H1 (cell line): ENCODE measurements at regions of chr17 and their contacts with region 1.

Region 1: DNA sequence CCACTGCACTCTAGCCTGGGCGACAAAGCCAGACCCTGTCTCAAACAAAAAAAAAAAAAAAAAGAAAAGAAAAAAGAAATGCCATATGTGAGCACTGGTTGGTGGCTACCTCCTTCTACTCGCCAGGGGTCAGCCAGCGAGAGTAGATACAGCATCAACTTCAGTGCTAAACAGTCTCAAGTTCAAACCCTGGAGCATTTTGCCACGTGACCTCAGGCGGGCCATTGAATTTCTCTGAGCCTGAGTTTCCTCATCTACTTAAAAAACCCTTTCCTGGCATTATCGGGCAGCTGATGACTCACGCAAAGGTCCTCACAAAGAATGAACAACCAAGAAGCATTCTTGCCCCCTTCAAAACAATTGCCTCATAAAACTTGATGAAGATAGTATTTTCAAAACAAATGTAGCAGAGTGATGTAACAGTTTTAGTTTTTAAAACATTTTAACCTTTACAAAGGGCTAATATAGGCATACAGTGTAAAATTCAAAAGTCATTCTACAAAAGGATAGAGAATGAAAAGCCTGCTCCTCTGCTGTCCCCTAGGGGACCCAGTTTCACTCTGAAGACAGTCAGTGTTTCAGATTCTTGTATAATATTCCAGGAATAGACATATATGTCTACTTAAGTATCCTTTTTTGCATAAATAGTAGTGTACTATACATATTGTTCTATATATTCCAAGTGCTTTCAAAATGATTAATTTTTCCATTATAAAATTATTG is 28.4 kb downstream of the DNAH2 start:
- DNase-seq: no peak
- H3K4me3 ChIP-seq: no peak overlapping the region
- H3K27ac ChIP-seq: no peak overlapping the region
- H3K4me1 ChIP-seq: no peaks in the 10 kb centered on the region
- H3K27me3 ChIP-seq: no peaks in the 10 kb centered on the region; a peak in 1 of 7 replicates
- CTCF ChIP-seq: no peak
- EP300 ChIP-seq: no peak
- POLR2A ChIP-seq: no peak
- RAD21 ChIP-seq: no peak

Region 2: GRCh38 chr17:7538891-7539290 is 207.0 kb before region 1 on chr17:
- CTCF ChIA-PET with region 1: no interaction called
- POLR2A ChIA-PET with region 1: no interaction called
- DNase-seq: no peak
- H3K4me3 ChIP-seq: no peak overlapping the region
- H3K27ac ChIP-seq: no peak overlapping the region
- H3K4me1 ChIP-seq: no peaks in the 10 kb centered on the region
- H3K27me3 ChIP-seq: no peaks in the 10 kb centered on the region; a peak in 1 of 7 replicates
- CTCF ChIP-seq: no peak
- EP300 ChIP-seq: no peak
- POLR2A ChIP-seq: no peak
- RAD21 ChIP-seq: no peak

Region 3: DNA sequence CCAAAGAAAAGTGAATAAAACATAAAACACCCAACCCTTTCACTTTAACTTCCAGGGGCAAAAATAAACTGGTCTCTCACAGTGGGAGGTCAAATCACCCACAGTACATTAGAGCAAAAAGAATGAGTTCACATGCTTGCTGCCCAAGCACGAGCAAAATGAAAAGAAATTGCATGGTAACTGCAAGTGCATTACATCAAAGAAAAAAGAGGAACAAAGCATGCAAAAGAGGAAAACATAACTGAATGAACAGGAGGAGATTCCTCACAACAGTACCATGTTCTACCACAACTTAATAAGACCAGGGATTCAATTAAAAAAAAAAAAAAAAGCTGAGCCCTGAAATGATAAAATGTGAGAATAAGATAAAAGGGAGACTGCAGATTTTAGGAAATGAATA is 16.1 kb before region 1 on chr17:
- CTCF ChIA-PET with region 1: interaction called, 17 read pairs
- POLR2A ChIA-PET with region 1: interaction called, 3 read pairs
- DNase-seq: no peak
- H3K4me3 ChIP-seq: no peak overlapping the region
- H3K27ac ChIP-seq: no peak overlapping the region
- H3K4me1 ChIP-seq: no peaks in the 10 kb centered on the region
- H3K27me3 ChIP-seq: no peaks in the 10 kb centered on the region; a peak in 2 of 7 replicates
- CTCF ChIP-seq: no peak
- EP300 ChIP-seq: no peak
- POLR2A ChIP-seq: no peak
- RAD21 ChIP-seq: no peak

Region 4: GRCh38 chr17:7782237-7782636 is 36.3 kb after region 1 on chr17:
- CTCF ChIA-PET with region 1: interaction called, 57 read pairs
- POLR2A ChIA-PET with region 1: no interaction called
- DNase-seq: no peak
- H3K4me3 ChIP-seq: no peak overlapping the region
- H3K27ac ChIP-seq: no peak overlapping the region
- H3K4me1 ChIP-seq: no peaks in the 10 kb centered on the region
- H3K27me3 ChIP-seq: no peaks in the 10 kb centered on the region; a peak in 2 of 7 replicates
- CTCF ChIP-seq: no peak
- EP300 ChIP-seq: no peak
- POLR2A ChIP-seq: no peak
- RAD21 ChIP-seq: no peak

Region 5: DNA sequence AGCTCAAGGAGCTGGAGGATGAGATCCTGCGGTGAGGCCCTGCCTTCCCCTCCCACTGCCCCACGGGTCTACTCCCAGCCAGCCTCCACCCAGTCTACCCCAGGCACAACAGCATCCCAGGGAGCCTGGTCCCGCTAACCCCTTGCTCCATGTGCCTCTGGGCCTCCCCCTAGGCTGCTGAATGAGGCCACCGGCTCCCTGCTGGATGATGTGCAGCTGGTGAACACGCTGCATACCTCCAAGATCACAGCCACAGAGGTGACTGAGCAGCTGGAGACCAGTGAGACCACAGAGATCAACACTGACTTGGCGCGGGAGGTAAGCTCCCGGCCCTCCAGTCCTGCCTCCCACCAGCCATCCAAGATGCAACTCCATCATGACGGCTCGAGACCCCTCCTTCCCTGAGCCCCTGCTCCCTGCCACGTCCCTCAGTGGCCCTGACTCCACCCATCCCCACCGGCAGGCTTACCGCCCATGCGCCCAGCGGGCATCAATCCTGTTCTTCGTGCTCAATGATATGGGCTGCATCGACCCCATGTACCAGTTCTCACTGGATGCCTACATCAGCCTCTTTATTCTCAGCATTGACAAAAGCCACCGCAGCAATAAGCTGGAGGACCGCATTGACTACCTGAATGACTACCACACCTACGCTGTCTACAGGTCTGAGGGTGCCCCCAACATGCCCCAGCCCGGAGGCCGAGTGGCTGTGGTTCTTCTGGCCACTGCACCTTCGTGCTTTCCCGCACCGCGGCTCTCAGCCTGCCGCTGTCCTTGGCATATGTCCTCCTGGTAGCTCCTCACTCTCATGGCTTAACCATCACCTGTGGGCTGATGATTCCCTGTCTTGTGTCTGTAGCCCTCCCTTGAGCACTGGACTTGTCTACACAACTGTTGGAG is 73.1 kb after region 1 on chr17:
- CTCF ChIA-PET with region 1: interaction called, 71 read pairs
- POLR2A ChIA-PET with region 1: no interaction called
- DNase-seq: no peak
- H3K4me3 ChIP-seq: no peak overlapping the region
- H3K27ac ChIP-seq: no peak overlapping the region
- H3K4me1 ChIP-seq: peaks cover 0 to 7% (median 5%) of the 10 kb centered on the region in 4 experiments; a peak in 5 of 7 replicates
- H3K27me3 ChIP-seq: peaks cover 0 to 4% (median 3%) of the 10 kb centered on the region in 4 experiments; a peak in 5 of 7 replicates
- CTCF ChIP-seq: no peak
- EP300 ChIP-seq: no peak
- POLR2A ChIP-seq: no peak
- RAD21 ChIP-seq: no peak

Region 6: GRCh38 chr17:7834962-7835813 is 89.3 kb after region 1 on chr17:
- CTCF ChIA-PET with region 1: interaction called, 26 read pairs
- POLR2A ChIA-PET with region 1: interaction called, 6 read pairs
- DNase-seq: peak; percentile 89 to 97
- H3K4me3 ChIP-seq: peak overlapping the region; percentile 70 to 77 (median 74)
- H3K27ac ChIP-seq: peak overlapping the region; percentile 85
- H3K4me1 ChIP-seq: peaks cover 5 to 24% (median 14%) of the 10 kb centered on the region in 4 experiments
- H3K27me3 ChIP-seq: peaks cover 11 to 56% (median 47%) of the 10 kb centered on the region in 4 experiments
- CTCF ChIP-seq: peak; percentile 69 to 88 (median 73)
- EP300 ChIP-seq: no peak
- POLR2A ChIP-seq: peak in 1 of 2 experiments; percentile 66; a peak in 2 of 3 replicates
- RAD21 ChIP-seq: peak; percentile 49 to 62; a peak in 3 of 4 replicates